Heart left ventricle (tissue), 16 donors: ENCODE measurements at regions of chr2 and their contacts with region 1.

Region 1: DNA sequence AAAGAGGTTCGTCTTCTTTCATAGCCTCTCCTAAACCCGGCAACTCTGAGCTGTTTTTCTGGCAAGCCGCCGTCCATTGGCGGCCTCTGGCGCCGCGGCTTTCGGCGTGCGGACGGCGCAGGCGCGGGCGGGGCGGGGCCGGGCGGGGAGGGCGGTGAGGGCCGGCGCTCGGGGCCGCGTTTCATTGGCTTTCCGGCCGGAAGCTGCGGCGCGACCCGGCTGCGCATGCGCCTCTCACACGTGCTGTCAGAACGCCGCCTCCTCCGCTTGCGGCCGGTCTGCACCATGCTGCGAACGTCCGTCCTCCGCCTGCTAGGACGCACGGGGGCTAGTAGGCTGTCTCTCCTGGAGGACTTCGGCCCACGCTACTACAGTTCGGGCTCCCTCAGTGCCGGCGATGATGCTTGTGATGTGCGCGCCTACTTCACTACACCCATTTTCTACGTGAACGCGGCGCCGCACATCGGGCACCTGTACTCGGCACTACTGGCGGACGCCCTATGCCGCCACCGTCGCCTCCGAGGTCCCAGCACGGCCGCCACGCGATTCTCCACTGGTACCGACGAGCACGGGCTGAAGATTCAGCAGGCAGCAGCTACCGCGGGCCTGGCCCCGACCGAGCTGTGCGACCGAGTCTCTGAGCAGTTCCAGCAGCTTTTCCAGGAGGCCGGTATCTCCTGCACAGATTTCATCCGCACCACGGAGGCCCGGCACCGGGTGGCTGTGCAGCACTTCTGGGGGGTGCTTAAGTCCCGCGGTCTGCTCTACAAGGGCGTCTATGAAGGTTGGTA is at the start of gene MARS2:
- DNase-seq: peak; percentile 94 to 97 (median 95)
- ATAC-seq: peak; percentile 91 to 97 (median 97)
- H3K4me3 ChIP-seq: peak within 1 kb of the TSS; percentile 70 to 93 (median 88)
- H3K27ac ChIP-seq: peak within 1 kb of the TSS in 11 of 12 donors; percentile 77 to 92 (median 86)
- H3K4me1 ChIP-seq: peaks cover 0 to 43% (median 26%) of the 10 kb centered on the region in 12 donors
- H3K27me3 ChIP-seq: no peaks in the 10 kb centered on the region
- CTCF ChIP-seq: peak in 3 of 12 donors; percentile 4 to 25 (median 11)
- POLR2A ChIP-seq: peak in 1 of 2 donors; percentile 66
- total RNA-seq, gene MARS2: 5.9 to 9.6 (median 7.0) TPM

Region 2: DNA sequence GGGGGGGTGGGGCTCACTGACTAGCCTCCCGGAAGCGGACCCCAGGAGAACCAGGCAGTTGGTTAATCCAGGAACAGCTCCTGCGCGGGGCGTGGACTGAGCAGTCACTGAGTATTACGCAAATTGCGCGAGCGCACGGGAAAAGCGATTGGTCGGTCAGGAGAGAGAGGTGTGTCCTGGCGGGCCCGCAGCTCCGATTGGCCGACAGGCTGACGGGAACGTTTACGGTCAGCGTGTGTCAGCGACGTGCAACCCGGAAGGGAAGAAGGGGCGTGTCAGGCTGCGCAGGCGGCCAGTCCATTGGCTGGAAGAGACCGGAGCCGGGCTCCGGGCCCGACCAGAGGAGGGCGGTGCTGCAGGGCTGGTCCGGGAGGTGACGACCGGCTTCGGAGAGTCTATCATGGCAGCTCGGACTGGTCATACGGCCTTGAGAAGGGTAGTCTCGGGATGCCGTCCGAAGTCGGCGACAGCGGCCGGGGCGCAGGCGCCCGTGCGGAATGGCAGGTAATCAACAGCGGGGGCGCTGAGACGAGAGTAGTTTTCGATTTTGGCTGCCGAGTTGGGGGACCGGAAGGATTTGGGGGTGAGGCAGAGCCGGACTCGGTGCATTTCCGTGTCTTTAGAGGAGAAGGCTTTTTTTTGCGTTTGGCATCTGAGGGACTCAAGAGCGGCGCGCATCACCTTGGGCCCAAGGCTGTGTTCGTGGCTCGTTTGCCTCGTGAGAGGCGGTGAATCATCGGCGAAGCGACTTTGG is 252.0 kb before region 1 on chr2 and contains the start of gene COQ10B:
- intact Hi-C with region 1: loop called in 1 of 10 experiments (anchors 10 kb)
- DNase-seq: peak; percentile 99 to 100 (median 100)
- ATAC-seq: peak; percentile 98 to 99 (median 98)
- H3K4me3 ChIP-seq: peak within 1 kb of the TSS; percentile 44 to 98 (median 78)
- H3K27ac ChIP-seq: peak within 1 kb of the TSS; percentile 88 to 100 (median 98)
- H3K4me1 ChIP-seq: peaks cover 0 to 45% (median 19%) of the 10 kb centered on the region in 12 donors
- H3K27me3 ChIP-seq: no peaks in the 10 kb centered on the region
- CTCF ChIP-seq: peak in 11 of 12 donors; percentile 6 to 71 (median 42)
- POLR2A ChIP-seq: peak; percentile 36 to 89
- total RNA-seq, gene COQ10B: 26.6 to 39.9 (median 33.8) TPM

Region 3: DNA sequence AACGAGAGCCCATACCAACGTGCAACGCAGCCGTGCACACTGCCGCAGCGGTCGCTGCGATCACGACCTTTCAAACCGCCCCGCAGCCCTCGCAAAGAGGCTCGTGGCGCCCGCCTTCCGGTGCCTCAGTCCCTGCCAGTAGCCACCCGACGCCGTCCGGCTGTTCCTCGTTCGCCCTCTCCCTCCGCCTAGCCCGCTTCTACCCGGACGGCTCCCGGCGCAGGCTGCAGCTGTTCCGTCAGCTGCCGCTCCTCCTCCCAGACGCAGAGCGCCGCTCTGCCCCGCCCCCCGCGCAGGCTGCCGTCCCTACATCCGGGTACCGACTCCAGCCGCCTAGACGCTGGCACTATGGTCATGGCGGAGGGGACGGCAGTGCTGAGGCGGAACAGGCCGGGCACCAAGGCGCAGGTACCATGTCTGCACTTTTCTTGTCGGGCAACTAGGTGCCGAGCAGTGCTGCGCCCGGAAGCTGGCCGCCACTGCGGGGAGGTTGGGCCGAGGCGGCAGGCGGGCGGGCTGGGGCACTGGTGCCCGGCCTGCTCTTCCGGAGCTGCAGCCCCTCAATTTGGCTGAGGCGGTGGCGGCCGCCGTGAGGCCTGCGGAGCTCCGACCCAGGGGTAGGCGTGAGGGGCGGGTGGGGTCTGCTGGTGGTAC is 189.4 kb before region 1 on chr2 and contains the start of gene MOB4:
- intact Hi-C with region 1: loop called in 5 of 10 experiments (anchors 2 to 10 kb)
- DNase-seq: peak; percentile 96 to 98 (median 97)
- ATAC-seq: peak; percentile 98 to 99 (median 99)
- H3K4me3 ChIP-seq: peak within 1 kb of the TSS; percentile 73 to 99 (median 94)
- H3K27ac ChIP-seq: peak within 1 kb of the TSS; percentile 69 to 99 (median 96)
- H3K4me1 ChIP-seq: peaks cover 0 to 41% (median 23%) of the 10 kb centered on the region in 12 donors
- H3K27me3 ChIP-seq: no peaks in the 10 kb centered on the region
- CTCF ChIP-seq: no peak
- POLR2A ChIP-seq: peak; percentile 8 to 96
- total RNA-seq, gene MOB4: 25.6 to 40.9 (median 35.2) TPM

Region 4: DNA sequence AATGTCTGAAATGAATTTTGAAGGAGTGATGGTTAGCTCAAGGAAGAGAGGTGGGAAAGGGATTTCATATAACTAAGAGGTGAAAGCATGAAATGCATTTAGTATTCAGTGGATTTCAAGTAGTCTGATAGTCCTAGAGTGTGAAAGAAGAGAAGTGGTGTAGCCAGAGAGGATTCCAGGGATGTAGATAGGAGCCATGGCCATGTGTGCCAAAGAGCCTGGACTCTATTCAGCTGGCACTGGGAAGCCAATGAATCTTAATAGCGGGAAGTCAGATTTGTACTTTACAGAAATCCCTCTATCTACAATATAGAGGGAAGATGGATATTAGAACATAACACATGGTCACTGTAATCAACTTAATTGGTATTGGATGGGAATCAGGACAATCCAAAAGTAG is 88.1 kb after region 1 on chr2:
- intact Hi-C with region 1: loop called in 1 of 10 experiments (anchors 5 kb)
- DNase-seq: peak in 2 of 5 donors; percentile 28 to 30
- ATAC-seq: peak; percentile 52 to 89 (median 87)
- H3K4me3 ChIP-seq: no peak overlapping the region
- H3K27ac ChIP-seq: no peak overlapping the region
- H3K4me1 ChIP-seq: peaks cover 0 to 19% (median 0%) of the 10 kb centered on the region in 12 donors
- H3K27me3 ChIP-seq: peaks cover 0 to 6% (median 0%) of the 10 kb centered on the region in 9 donors
- CTCF ChIP-seq: no peak
- POLR2A ChIP-seq: no peak

Region 5: DNA sequence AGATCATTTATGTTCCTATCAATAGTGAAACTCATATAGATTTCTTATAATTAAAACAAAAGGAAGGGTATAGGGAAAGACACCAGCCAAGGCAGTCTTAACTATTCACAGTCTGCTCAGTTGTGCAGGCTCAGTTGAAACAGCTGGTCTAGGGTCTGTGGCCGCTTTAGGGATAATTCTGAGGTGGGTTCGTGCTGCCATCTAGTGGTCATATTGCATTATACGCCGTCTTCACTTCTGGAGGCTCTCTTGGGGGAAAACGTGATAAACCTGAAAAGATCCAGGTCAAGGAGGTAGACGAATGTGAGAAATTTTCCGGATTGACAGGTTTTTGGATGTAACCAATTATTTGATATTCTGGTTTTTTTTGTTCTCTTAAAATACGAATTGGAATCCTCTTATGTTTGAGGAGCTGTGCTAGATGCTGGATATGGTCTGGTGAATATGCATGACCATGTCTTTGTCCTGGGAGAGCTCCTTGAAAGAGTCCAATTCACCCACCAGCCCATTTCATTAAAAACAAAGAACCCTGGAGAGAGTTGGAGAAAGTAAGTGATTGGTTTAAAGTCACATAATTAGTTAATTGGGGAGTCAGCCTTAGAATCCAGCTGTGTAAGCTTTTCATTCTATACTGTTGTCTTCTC is 591.5 kb after region 1 on chr2:
- intact Hi-C with region 1: loop called in 9 of 10 experiments (anchors 2 to 10 kb)
- DNase-seq: peak in 4 of 5 donors; percentile 25 to 41 (median 38)
- ATAC-seq: peak; percentile 64 to 82 (median 76)
- H3K4me3 ChIP-seq: no peak overlapping the region
- H3K27ac ChIP-seq: no peak overlapping the region
- H3K4me1 ChIP-seq: peaks cover 0 to 5% (median 0%) of the 10 kb centered on the region in 12 donors
- H3K27me3 ChIP-seq: no peaks in the 10 kb centered on the region
- CTCF ChIP-seq: peak; percentile 72 to 91 (median 82)
- POLR2A ChIP-seq: no peak